ENCODE measurements at regions of chr21 and their contacts with region 1.

Region 1: GRCh38 chr21:25607151-25608043 is at the start of gene MRPL39:
- DNase-seq: peak; percentile 92
- H3K4me3 ChIP-seq: peak within 1 kb of the TSS; percentile 49
- H3K4me3 Mint-ChIP-seq: peak within 1 kb of the TSS; percentile 84
- H3K27ac Mint-ChIP-seq: peak within 1 kb of the TSS; percentile 94
- H3K4me1 ChIP-seq: no peaks in the 10 kb centered on the region
- H3K4me1 Mint-ChIP-seq: no peaks in the 10 kb centered on the region
- H3K27me3 ChIP-seq: no peaks in the 10 kb centered on the region
- H3K27me3 Mint-ChIP-seq: no peaks in the 10 kb centered on the region
- CTCF ChIP-seq: peak; percentile 26 to 73
- total RNA-seq, gene MRPL39: 37.3 and 39.8 TPM in 2 replicates

Region 2: GRCh38 chr21:25708467-25709065 is 101.2 kb after region 1 on chr21:
- CTCF ChIA-PET with region 1: no interaction called
- POLR2A ChIA-PET with region 1: no interaction called
- intact Hi-C with region 1: loop called (anchors 1 kb)
- DNase-seq: peak in 1 of 2 experiments; percentile 22
- H3K4me3 ChIP-seq: no peak overlapping the region
- H3K4me3 Mint-ChIP-seq: no peak overlapping the region
- H3K27ac Mint-ChIP-seq: no peak overlapping the region
- H3K4me1 ChIP-seq: no peaks in the 10 kb centered on the region
- H3K4me1 Mint-ChIP-seq: no peaks in the 10 kb centered on the region
- H3K27me3 ChIP-seq: no peaks in the 10 kb centered on the region
- H3K27me3 Mint-ChIP-seq: peaks cover 3% of the 10 kb centered on the region
- CTCF ChIP-seq: peak; percentile 75 to 82

Region 3: GRCh38 chr21:25734904-25735645 is 127.7 kb after region 1 on chr21 and contains the starts of genes ATP5PF and GABPA:
- CTCF ChIA-PET with region 1: no interaction called
- POLR2A ChIA-PET with region 1: no interaction called
- intact Hi-C with region 1: loop called (anchors 1 kb)
- DNase-seq: peak; percentile 95 to 98
- H3K4me3 ChIP-seq: peak within 1 kb of the TSS; percentile 60
- H3K4me3 Mint-ChIP-seq: peak within 1 kb of the TSS; percentile 92
- H3K27ac Mint-ChIP-seq: peak within 1 kb of the TSS; percentile 98
- H3K4me1 ChIP-seq: peaks cover 7% of the 10 kb centered on the region; the same call in 1 of the 2 replicates
- H3K4me1 Mint-ChIP-seq: no peaks in the 10 kb centered on the region
- H3K27me3 ChIP-seq: no peaks in the 10 kb centered on the region
- H3K27me3 Mint-ChIP-seq: no peaks in the 10 kb centered on the region
- CTCF ChIP-seq: no peak
- total RNA-seq, gene ATP5PF: 156 and 175 TPM in 2 replicates
- total RNA-seq, gene GABPA: 17.4 and 20.3 TPM in 2 replicates

Region 4: GRCh38 chr21:25801217-25802014 is 194.0 kb after region 1 on chr21:
- CTCF ChIA-PET with region 1: interaction called, 3 read pairs
- POLR2A ChIA-PET with region 1: no interaction called
- intact Hi-C with region 1: loop called (anchors 1 kb)
- DNase-seq: peak; percentile 89 to 91
- H3K4me3 ChIP-seq: no peak overlapping the region
- H3K4me3 Mint-ChIP-seq: peak overlapping the region; percentile 45
- H3K27ac Mint-ChIP-seq: no peak overlapping the region
- H3K4me1 ChIP-seq: no peaks in the 10 kb centered on the region
- H3K4me1 Mint-ChIP-seq: peaks cover 7% of the 10 kb centered on the region
- H3K27me3 ChIP-seq: no peaks in the 10 kb centered on the region
- H3K27me3 Mint-ChIP-seq: peaks cover 21% of the 10 kb centered on the region
- CTCF ChIP-seq: peak; percentile 95 to 98

Region 5: GRCh38 chr21:25862596-25862995 is 255.2 kb after region 1 on chr21:
- CTCF ChIA-PET with region 1: no interaction called
- POLR2A ChIA-PET with region 1: no interaction called
- intact Hi-C with region 1: loop called (anchors 2 kb)
- DNase-seq: peak in 1 of 2 experiments; percentile 5
- H3K4me3 ChIP-seq: no peak overlapping the region
- H3K4me3 Mint-ChIP-seq: no peak overlapping the region
- H3K27ac Mint-ChIP-seq: no peak overlapping the region
- H3K4me1 ChIP-seq: no peaks in the 10 kb centered on the region
- H3K4me1 Mint-ChIP-seq: no peaks in the 10 kb centered on the region
- H3K27me3 ChIP-seq: no peaks in the 10 kb centered on the region
- H3K27me3 Mint-ChIP-seq: no peaks in the 10 kb centered on the region
- CTCF ChIP-seq: peak; percentile 42 to 50

Region 6: DNA sequence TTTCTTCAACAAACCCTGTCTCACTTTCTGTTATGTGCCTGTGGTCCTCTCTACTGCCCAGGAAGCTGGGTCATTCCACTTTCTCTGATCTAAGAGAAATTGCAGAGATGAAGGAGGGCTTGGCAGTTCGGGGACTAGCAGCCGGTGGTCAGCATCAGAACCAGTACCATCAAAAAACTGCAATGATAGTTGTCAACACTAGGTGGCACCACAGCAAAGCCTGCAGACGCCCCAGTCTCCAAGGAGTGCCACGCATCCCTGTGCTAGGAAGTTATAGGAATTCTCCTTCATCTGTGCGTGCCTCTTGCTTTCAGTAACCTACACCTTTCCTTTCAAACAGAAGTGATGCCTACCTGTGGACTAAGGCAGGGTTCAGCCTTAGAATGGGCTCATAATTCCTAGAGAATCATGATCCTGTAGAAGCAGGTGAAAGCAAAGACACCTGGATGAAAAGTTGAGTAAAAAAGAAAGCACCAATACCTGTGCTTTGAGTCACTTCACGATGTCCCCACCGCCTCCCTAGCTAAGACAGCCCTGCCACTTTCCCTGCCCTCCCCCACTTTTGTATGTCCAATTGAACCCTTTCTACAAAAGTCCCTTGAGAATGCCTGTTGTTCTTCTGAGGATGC is 1108.6 kb after region 1 on chr21:
- CTCF ChIA-PET with region 1: no interaction called
- POLR2A ChIA-PET with region 1: no interaction called
- intact Hi-C with region 1: loop called (anchors 2 kb)
- DNase-seq: peak; percentile 37 to 43
- H3K4me3 ChIP-seq: no peak overlapping the region
- H3K4me3 Mint-ChIP-seq: no peak overlapping the region
- H3K27ac Mint-ChIP-seq: peak overlapping the region; percentile 44
- H3K4me1 ChIP-seq: peaks cover 5% of the 10 kb centered on the region; the same call in 1 of the 2 replicates
- H3K4me1 Mint-ChIP-seq: peaks cover 15% of the 10 kb centered on the region
- H3K27me3 ChIP-seq: no peaks in the 10 kb centered on the region
- H3K27me3 Mint-ChIP-seq: no peaks in the 10 kb centered on the region
- CTCF ChIP-seq: peak; percentile 52 to 56